ENCODE measurements at regions of chr13 and their contacts with region 1.

Region 1: GRCh38 chr13:59734393-59734792 is 429.3 kb downstream of the DIAPH3 start:
- DNase-seq: no peak
- ATAC-seq: no peak
- H3K4me3 ChIP-seq: no peak overlapping the region
- H3K27ac ChIP-seq: no peak overlapping the region
- H3K4me1 ChIP-seq: no peaks in the 10 kb centered on the region
- H3K27me3 ChIP-seq: no peaks in the 10 kb centered on the region
- CTCF ChIP-seq: no peak

Region 2: DNA sequence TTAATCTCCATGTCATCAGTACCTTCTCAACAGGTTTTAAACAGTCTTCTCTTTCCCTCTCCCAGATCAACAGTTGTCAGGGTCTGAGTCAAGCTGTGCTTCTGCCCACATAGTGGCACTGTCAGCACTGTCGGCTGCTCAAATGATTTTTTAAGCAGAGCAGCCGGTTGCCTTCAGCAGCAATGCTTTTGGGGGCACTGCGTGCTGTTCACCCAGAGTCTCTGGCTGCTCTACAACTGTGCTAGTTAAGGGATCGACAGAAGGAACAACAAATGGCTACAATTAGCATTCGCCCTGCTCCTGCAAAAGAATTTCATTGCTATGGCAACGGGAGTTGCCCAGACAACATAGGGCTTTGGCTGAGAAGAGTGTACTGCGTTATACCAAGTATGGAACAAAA is 16.5 kb after region 1 on chr13:
- CTCF ChIA-PET with region 1: no interaction called
- POLR2A ChIA-PET with region 1: interaction called, 12 read pairs
- intact Hi-C with region 1: no loop called
- DNase-seq: no peak
- ATAC-seq: no peak
- H3K4me3 ChIP-seq: no peak overlapping the region
- H3K27ac ChIP-seq: no peak overlapping the region
- H3K4me1 ChIP-seq: peaks cover 6% of the 10 kb centered on the region
- H3K27me3 ChIP-seq: no peaks in the 10 kb centered on the region
- CTCF ChIP-seq: no peak

Region 3: GRCh38 chr13:60143775-60144174 is 409.4 kb after region 1 on chr13:
- CTCF ChIA-PET with region 1: no interaction called
- POLR2A ChIA-PET with region 1: no interaction called
- intact Hi-C with region 1: no loop called
- DNase-seq: peak; percentile 21
- ATAC-seq: peak; percentile 46
- H3K4me3 ChIP-seq: no peak overlapping the region
- H3K27ac ChIP-seq: no peak overlapping the region
- H3K4me1 ChIP-seq: peaks cover 23% of the 10 kb centered on the region
- H3K27me3 ChIP-seq: no peaks in the 10 kb centered on the region
- CTCF ChIP-seq: no peak